Calu3 (cell line): ENCODE measurements at regions of chr7 and their contacts with region 1.

Region 1: DNA sequence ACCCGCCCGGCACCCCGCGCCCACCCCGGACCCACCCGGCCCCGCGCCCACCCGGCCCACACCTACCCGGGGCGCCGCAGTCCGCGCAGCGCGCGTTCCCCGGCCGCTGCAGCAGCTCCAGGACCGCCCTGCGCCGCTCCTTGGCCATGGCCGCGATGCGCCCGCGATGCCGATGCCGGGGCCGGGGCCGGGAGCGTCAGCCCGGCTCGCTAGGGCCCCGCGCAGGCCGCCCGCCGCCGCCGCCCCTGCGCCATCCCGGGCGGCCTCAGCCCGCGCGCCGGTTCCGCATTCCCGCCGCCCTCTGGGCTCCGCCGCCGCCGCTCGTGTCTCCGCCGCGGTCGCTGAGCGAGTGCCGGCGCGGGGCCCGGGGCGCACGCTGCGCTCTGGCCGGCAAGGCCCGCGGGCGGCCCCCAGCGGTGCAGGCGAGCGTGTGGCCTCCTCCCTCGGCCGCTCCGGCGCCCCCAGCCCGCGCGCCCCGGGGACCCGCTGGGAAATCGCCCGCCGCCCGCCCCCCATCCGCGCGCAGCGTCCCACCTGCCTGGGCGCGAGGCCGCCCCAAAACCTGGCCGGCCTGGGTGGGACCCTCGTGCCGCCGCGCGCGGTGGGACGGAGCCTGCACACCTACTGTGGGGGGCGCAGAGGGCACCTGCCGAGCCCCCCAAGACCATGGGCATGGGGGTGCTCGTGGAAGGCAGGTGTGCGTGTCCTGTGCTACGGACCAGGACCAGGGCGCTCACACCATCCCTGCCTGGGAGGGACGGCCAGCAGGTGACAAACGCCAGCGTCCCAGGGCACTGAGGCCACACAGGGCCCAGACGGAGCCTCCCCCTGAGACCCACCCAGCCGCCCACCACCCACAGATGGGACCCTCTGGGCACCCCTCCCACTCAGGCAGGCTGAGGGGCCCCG is at the start of gene ADAP1:
- DNase-seq: peak; percentile 92
- H3K4me3 Mint-ChIP-seq: peak within 1 kb of the TSS; percentile 65
- H3K27ac Mint-ChIP-seq: peak within 1 kb of the TSS; percentile 97
- H3K4me1 Mint-ChIP-seq: peaks cover 26% of the 10 kb centered on the region
- H3K27me3 Mint-ChIP-seq: no peaks in the 10 kb centered on the region
- CTCF ChIP-seq: peak; percentile 57
- total RNA-seq, gene ADAP1: 173 and 220 TPM in 2 replicates

Region 2: DNA sequence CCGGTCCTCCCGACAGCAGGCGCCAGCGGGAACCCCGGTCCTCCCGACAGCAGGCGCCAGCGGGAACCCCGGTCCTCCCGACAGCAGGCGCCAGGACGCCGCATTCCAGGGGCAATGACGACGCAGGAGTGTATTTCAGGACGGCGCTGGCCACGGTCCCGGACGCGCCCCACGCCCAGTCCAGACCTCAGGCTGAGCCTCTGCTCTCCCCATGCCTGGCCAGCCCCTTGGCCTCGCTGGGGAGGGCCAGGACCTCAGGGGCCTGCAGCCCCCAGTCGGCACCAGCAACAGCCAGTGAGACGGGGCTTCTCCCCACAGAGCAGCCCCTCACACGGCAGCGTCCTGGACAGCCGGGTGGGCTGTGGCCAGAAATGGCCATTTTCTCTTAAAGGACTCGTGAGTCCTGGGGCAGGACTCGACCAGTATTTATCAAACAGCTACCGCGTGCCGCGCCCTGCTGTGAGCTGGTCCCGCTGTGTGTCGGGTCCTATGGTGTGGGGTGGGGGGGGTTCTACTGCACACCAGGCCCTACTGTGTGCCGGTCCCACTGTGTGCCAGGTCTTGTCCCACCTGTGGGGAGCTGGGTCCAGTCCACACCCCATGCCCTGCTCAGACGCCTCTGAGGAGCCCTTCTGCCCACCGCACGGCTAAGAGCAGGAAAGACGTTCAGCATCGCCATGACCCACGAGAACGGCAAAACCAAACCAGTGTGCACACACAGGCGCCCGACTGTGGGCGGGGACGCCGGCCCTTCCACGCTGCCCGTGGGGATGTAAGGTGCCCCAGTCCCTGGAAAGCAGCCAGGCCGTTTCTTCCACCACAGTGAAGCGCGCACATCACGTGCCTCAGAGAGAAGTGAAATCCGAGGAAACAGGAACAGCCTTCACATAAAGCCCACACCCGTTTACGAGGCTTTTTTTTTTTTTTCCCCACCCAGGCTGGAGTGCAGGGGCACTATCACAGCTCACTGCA is 44.9 kb before region 1 on chr7:
- CTCF ChIA-PET with region 1: interaction called, 18 read pairs
- intact Hi-C with region 1: loop called (anchors 5 kb)
- DNase-seq: no peak
- H3K4me3 Mint-ChIP-seq: no peak overlapping the region
- H3K27ac Mint-ChIP-seq: no peak overlapping the region
- H3K4me1 Mint-ChIP-seq: peaks cover 32% of the 10 kb centered on the region
- H3K27me3 Mint-ChIP-seq: peaks cover 20% of the 10 kb centered on the region
- CTCF ChIP-seq: no peak

Region 3: DNA sequence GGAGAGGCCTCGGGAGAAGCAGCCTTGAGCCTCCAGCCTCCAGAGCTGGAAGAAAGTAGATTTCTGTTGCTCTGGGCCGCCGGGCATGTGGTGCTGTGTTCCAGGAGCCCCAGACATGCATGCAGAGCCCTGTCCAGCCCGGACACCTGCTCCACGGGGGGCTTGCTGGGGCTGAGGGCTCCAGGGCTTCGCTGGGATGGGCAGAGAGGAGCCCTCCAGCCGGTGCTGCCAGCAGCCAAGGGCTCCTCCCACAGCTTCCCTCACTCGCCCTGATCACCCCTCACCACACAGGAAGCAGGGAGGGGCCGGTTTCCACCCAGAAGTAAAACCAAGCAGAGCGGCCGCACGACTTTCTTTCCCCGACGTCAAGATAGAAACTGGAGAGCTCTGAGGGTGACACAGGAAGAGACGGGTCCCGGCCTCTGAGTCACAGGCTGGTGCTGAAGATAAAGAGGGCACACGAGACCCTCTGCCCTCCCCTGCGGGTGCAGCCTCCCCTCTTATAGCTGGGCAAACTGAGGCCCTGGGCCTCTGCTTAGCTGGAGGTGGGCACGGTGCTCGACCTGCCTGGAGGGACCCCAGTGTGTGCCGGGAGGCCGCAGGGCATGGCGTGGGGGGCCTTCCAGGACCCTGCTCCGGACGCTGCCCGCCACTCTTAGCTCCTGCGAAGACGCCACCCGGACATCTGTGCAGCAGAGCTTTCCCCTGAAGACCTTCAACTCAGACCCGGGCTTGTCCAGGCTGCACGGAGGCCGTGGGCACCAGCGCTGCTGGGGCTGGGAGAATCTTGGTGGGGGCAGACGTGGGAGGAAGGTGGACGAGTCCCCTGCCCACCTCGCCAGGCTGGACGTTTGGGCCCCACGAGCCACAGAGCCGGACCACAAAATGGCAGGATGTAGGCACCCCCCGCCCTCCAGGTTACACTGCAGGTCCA is 31.2 kb before region 1 on chr7:
- CTCF ChIA-PET with region 1: interaction called, 11 read pairs
- intact Hi-C with region 1: loop called (anchors 1 kb)
- DNase-seq: peak; percentile 92
- H3K4me3 Mint-ChIP-seq: peak overlapping the region; percentile 45
- H3K27ac Mint-ChIP-seq: peak overlapping the region; percentile 85
- H3K4me1 Mint-ChIP-seq: peaks cover 75% of the 10 kb centered on the region
- H3K27me3 Mint-ChIP-seq: no peaks in the 10 kb centered on the region
- CTCF ChIP-seq: no peak

Region 4: GRCh38 chr7:1028031-1028770 is 73.6 kb after region 1 on chr7:
- CTCF ChIA-PET with region 1: no interaction called
- intact Hi-C with region 1: no loop called
- DNase-seq: peak; percentile 98
- H3K4me3 Mint-ChIP-seq: peak overlapping the region; percentile 95
- H3K27ac Mint-ChIP-seq: peak overlapping the region; percentile 82
- H3K4me1 Mint-ChIP-seq: peaks cover 15% of the 10 kb centered on the region
- H3K27me3 Mint-ChIP-seq: no peaks in the 10 kb centered on the region
- CTCF ChIP-seq: no peak